ENCODE measurements at regions of chr10 and their contacts with region 1.

Region 1: DNA sequence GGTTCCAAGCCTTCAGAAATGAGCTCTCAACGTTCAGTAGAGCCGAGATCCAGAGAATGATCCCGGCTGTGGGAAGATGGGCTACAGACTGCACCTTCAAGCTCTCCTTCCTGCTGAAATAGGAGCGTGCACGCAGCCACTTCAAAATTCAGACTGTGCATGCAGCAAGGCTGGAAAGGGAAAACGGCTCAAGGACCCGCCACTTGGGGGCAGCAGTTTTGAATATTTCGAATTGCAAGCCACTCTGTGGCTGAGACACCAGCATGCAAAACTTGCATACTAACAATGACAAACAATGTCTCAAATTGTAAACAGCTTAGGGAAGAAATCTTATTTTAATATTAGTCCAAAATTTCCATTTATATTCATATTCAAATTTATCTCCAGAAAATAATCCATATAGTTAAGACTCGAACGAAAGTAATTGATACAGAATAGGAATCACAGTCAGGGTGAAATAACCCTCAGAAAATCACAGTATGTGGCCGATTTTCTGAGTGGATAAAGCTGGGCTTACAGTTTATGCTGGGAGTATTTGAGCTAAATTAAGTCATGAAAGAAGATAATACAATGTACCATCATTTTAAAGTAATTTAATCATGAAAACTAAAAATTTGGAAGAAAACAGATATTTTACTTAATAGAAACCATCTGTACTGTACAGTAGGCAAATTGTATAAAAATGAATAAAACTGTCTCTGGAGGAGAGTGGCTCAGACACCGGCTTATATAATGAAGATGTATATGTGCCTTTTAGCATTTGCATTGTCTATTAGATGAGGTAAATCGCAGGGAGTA is 137.9 kb upstream of the MKI67 start:
- DNase-seq: peak; percentile 60
- ATAC-seq: peak; percentile 51 to 53

Region 2: DNA sequence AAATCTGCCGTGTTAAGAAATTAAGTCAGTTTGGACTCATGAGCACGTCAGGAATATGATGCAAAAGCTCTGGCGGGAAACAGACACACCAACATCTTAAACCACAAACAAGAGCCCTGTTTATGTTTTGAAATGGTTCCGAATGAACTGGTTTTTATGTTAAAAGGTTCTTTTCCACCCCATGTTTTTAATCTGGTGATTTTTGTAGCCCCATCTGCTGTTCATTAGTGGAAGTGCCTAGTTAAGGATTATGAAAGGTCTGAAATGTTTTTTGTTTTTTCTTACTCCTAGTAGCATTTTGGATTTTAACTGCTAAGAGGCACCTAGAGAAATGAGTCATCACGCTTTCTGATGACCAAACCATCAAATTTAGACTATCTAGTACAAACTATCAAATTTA is 266.2 kb after region 1 on chr10:
- intact Hi-C with region 1: loop called in 1 of 2 experiments (anchors 5 kb)
- DNase-seq: no peak
- ATAC-seq: no peak

Region 3: GRCh38 chr10:128739930-128740329 is 475.8 kb after region 1 on chr10:
- intact Hi-C with region 1: no loop called
- DNase-seq: no peak
- ATAC-seq: no peak

Region 4: DNA sequence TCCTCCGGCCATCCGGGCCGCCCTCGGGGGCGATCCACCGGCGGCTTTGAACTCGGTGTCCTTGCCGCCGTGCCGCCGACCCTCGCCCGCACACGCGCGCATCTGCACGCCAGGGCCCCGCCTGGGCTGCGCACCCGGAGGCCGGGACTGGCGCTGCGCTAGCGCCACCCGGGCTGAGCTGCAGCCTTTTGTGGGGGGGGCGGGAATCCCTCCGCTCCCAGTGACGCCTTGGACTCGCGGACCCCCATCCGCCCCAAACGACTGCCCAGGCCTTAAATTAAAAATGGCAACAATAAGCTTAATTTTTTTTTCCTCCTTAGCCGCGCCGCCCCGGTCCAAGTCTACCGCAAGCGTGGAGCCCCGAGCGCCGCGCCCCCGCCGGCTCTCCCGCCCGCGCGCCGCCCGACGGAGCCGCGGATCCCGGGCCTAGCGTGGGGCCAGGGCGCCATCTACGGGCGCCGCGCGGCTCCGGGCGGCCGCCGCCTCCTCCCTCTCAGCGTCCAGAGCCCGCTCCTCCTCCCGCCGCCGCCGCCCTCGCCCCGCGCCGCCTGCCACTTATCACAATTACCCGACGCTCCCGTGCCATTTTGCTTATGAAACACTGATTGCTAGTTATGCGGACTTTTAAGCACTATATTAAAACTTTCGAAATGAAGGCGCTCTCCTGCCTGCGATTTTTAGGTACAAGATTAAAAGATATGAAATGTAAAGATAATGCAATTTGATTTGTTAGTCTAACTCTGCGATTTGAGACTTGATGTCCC is 1707.5 kb after region 1 on chr10:
- intact Hi-C with region 1: loop called in 1 of 2 experiments (anchors 10 kb)
- DNase-seq: peak; percentile 69
- ATAC-seq: peak; percentile 91 to 92

Measured in left cardiac atrium (tissue), 4 donors.